Activated CD4-positive, alpha-beta T cell treated with anti-CD3 and anti-CD28 coated beads, Interleukin-2, amount 10 ng/mL, durations not matched to agents 24 days and 14 days (primary cell): ENCODE measurements at regions of chr13 and their contacts with region 1.

Region 1: GRCh38 chr13:22107548-22107947 is 436.7 kb downstream of the FGF9 start:
- DNase-seq: no peak
- H3K4me3 Mint-ChIP-seq: peak overlapping the region; percentile 45
- H3K27ac Mint-ChIP-seq: peak overlapping the region; percentile 73
- H3K4me1 Mint-ChIP-seq: peaks cover 57% of the 10 kb centered on the region
- H3K27me3 Mint-ChIP-seq: no peaks in the 10 kb centered on the region

Region 2: DNA sequence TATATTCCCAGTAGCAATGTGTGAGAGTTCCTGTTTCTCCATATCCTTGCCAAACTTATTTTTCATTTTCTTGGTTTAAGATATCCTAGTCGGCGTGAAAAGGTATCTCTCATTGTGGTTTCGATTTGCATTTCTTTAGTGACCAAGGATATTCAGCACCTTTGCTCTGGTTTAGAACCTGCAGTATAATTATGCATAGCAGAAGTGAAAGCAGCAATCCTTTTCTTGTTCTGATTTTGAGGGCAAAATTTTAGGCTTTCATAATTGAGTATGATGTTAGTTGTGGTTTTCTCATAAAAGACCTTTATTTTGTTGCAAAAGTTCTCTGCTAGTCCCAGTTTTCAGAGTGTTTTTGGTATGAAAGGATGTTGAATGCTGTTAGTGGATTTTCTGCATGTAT is 54.3 kb after region 1 on chr13:
- intact Hi-C with region 1: loop called (anchors 2 kb)
- DNase-seq: no peak
- H3K4me3 Mint-ChIP-seq: no peak overlapping the region
- H3K27ac Mint-ChIP-seq: no peak overlapping the region
- H3K4me1 Mint-ChIP-seq: peaks cover 15% of the 10 kb centered on the region
- H3K27me3 Mint-ChIP-seq: peaks cover 1% of the 10 kb centered on the region